HepG2 (cell line): ENCODE measurements at regions of chr20 and their contacts with region 1.

Region 1: GRCh38 chr20:47150403-47151152 is 205.9 kb downstream of the ZMYND8 start:
- DNase-seq: peak; percentile 86
- ATAC-seq: peak; percentile 97
- H3K4me3 ChIP-seq: no peak overlapping the region
- H3K27ac ChIP-seq: no peak overlapping the region
- H3K4me1 ChIP-seq: peaks cover 29% of the 10 kb centered on the region
- H3K27me3 ChIP-seq: peaks cover 0 to 11% of the 10 kb centered on the region in 2 experiments; a peak in 3 of 5 replicates
- CTCF ChIP-seq: peak; percentile 98
- EP300 ChIP-seq: no peak
- POLR2A ChIP-seq: no peak
- RAD21 ChIP-seq: peak; percentile 93

Region 2: DNA sequence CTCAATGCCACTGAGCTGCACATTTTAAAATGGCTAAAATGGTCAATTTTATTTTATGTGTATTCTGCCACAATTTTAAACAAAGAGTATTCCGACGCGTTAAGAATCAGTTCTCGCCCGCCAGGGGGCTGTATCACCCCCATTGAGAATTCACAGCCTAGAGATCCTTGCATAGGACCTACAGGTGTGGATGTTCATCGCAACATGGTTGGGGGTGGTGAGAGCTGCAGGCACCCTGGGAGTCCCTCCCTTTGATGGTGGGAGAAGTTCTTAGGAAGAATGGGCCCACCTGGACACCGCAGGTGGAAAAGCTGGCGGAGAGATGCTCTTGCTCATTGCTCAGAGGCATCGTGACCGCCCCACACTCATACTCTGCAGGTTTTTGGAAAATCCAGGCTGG is 377.7 kb before region 1 on chr20:
- CTCF ChIA-PET with region 1: interaction called, 5 read pairs
- POLR2A ChIA-PET with region 1: no interaction called
- in situ Hi-C with region 1: no loop called
- intact Hi-C with region 1: loop called (anchors 1 kb)
- DNase-seq: peak; percentile 40
- ATAC-seq: peak; percentile 73
- H3K4me3 ChIP-seq: no peak overlapping the region
- H3K27ac ChIP-seq: no peak overlapping the region
- H3K4me1 ChIP-seq: no peaks in the 10 kb centered on the region
- H3K27me3 ChIP-seq: peaks cover 6 to 34% of the 10 kb centered on the region in 2 experiments; a peak in 3 of 5 replicates
- CTCF ChIP-seq: peak; percentile 62
- EP300 ChIP-seq: no peak
- POLR2A ChIP-seq: no peak
- RAD21 ChIP-seq: peak; percentile 53; the same call in 1 of the 2 replicates